Dorsolateral prefrontal cortex (tissue), 120 donors: ENCODE measurements at regions of chr9 and their contacts with region 1.

Region 1: DNA sequence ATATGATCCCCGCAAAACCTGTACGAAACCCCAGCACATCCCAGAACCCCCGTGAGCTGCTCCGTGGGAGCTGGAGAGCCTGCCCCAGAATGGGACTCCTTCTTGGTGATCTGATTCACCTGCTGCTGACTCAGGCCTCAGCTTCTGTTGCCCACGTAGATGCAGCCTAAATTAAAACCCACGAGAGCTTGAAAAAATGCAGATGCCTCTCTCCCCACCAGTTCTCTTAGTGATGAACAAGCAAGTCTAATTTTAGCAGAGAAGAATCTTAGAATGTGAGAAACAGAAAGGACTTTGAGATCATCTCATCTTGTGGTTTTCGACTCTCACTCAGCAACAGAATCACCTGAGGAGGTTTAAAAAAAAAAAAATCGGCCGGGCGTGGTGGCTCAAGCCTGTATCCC is 57.6 kb downstream of the TMOD1 start:
- DNase-seq: peak in 5 of 10 donors; percentile 26 to 76 (median 70)
- H3K4me3 ChIP-seq: peak overlapping the region in 2 of 59 donors; percentile 3
- H3K27ac ChIP-seq: peak overlapping the region in 58 of 59 donors; percentile 44 to 98 (median 88)
- H3K27me3 ChIP-seq: no peaks in the 10 kb centered on the region
- CTCF ChIP-seq: no peak

Region 2: DNA sequence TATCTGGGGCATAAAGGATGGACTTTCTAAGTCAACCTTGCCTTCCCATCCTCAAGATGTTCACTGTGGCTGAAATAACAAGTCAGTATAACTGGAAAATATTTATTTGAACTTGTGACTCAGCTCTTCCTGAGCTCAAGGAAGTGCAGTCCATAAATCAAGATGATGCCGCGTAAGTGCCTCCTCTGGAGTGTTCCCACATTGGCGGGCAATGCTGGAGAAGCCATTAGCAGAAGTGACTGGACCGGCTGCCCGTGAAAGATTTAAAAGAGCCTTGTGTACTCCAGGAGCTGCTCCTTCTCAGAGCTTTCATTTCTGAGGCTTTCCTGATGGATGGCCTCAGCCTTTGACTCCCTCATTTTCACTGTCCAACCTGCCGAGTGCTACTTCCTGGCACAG is 40.2 kb before region 1 on chr9:
- intact Hi-C with region 1: loop called in 1 of 2 experiments (anchors 5 kb)
- DNase-seq: peak in 1 of 10 donors; percentile 44
- H3K4me3 ChIP-seq: no peak overlapping the region
- H3K27ac ChIP-seq: peak overlapping the region in 28 of 59 donors; percentile 12 to 72 (median 38)
- H3K27me3 ChIP-seq: no peaks in the 10 kb centered on the region
- CTCF ChIP-seq: no peak

Region 3: GRCh38 chr9:97598461-97599288 is 39.6 kb after region 1 on chr9:
- intact Hi-C with region 1: loop called (anchors 5 kb)
- DNase-seq: peak; percentile 44 to 88 (median 74)
- H3K4me3 ChIP-seq: no peak overlapping the region
- H3K27ac ChIP-seq: peak overlapping the region in 33 of 59 donors; percentile 3 to 94 (median 40)
- H3K27me3 ChIP-seq: no peaks in the 10 kb centered on the region
- CTCF ChIP-seq: peak; percentile 60 to 92 (median 85)